OCI-LY7 (cell line): ENCODE measurements at regions of chr10 and their contacts with region 1.

Region 1: DNA sequence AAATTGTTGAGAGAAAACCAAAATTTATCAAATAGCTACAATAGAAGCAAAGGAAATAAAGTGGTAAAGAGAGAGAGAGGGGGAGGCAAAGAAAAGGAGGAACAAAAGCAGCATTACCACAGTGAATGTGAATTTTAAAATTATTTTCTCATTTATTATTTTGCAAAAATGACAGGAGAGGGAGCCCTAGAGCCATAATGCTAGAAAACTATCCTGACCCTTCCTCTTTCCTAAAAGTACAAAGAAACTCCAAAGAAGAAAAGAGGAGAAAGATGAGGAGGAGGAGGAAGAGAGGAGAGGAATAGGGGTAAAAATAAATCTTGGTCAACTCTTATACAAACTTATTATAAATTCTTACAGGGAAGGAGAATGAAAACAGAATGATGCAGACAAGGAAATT is 921.5 kb downstream of the NRG3 start:
- DNase-seq: peak; percentile 4
- H3K4me3 ChIP-seq: no peak overlapping the region
- H3K27ac ChIP-seq: no peak overlapping the region
- H3K4me1 ChIP-seq: no peaks in the 10 kb centered on the region
- CTCF ChIP-seq: peak; percentile 76

Region 2: GRCh38 chr10:83871187-83872081 is 1074.9 kb after region 1 on chr10:
- CTCF ChIA-PET with region 1: no interaction called
- POLR2A ChIA-PET with region 1: no interaction called
- intact Hi-C with region 1: loop called (anchors 10 kb)
- DNase-seq: peak; percentile 76
- H3K4me3 ChIP-seq: no peak overlapping the region
- H3K27ac ChIP-seq: no peak overlapping the region
- H3K4me1 ChIP-seq: no peaks in the 10 kb centered on the region
- CTCF ChIP-seq: peak; percentile 94